ENCODE measurements at regions of chr17 and their contacts with region 1.

Region 1: GRCh38 chr17:81666342-81667191 is at the starts of genes CCDC137 and OXLD1:
- DNase-seq: peak; percentile 94 to 96 (median 96)
- H3K4me3 ChIP-seq: peak within 1 kb of the TSS; percentile 63 to 91 (median 75)
- H3K4me3 Mint-ChIP-seq: peak within 1 kb of the TSS; percentile 92 to 99
- H3K27ac ChIP-seq: peak within 1 kb of the TSS; percentile 76 to 89
- H3K27ac Mint-ChIP-seq: peak within 1 kb of the TSS; percentile 75 to 97 (median 96)
- H3K4me1 ChIP-seq: peaks cover 24 to 30% of the 10 kb centered on the region in 2 donors
- H3K4me1 Mint-ChIP-seq: peaks cover 24% of the 10 kb centered on the region
- H3K27me3 ChIP-seq: no peaks in the 10 kb centered on the region
- H3K27me3 Mint-ChIP-seq: peaks cover 0 to 4% (median 0%) of the 10 kb centered on the region in 3 donors
- CTCF ChIP-seq: no peak
- polyA plus RNA-seq, gene CCDC137: 2.4 to 8.8 (median 3.6) TPM
- polyA plus RNA-seq, gene OXLD1: 46.0 to 61.1 (median 51.8) TPM

Region 2: GRCh38 chr17:81683584-81684237 is 17.1 kb after region 1 on chr17 and contains the starts of genes ARL16 and HGS:
- intact Hi-C with region 1: loop called (anchors 1 kb)
- DNase-seq: peak; percentile 98 to 99 (median 99)
- H3K4me3 ChIP-seq: peak within 1 kb of the TSS; percentile 84 to 99 (median 97)
- H3K4me3 Mint-ChIP-seq: peak within 1 kb of the TSS; percentile 87 to 92
- H3K27ac ChIP-seq: peak within 1 kb of the TSS; percentile 51 to 94
- H3K27ac Mint-ChIP-seq: peak within 1 kb of the TSS; percentile 86 to 98 (median 94)
- H3K4me1 ChIP-seq: peaks cover 22 to 25% of the 10 kb centered on the region in 2 donors
- H3K4me1 Mint-ChIP-seq: peaks cover 25% of the 10 kb centered on the region
- H3K27me3 ChIP-seq: no peaks in the 10 kb centered on the region
- H3K27me3 Mint-ChIP-seq: peaks cover 0 to 1% (median 0%) of the 10 kb centered on the region in 3 donors
- CTCF ChIP-seq: no peak
- polyA plus RNA-seq, gene ARL16: 17.6 to 43.0 (median 28.7) TPM
- polyA plus RNA-seq, gene HGS: 19.3 to 200 (median 28.0) TPM

Region 3: GRCh38 chr17:81702971-81703746 is 36.6 kb after region 1 on chr17 and contains the start of gene MRPL12:
- intact Hi-C with region 1: loop called in 1 of 2 experiments (anchors 5 kb)
- DNase-seq: peak; percentile 84 to 92 (median 86)
- H3K4me3 ChIP-seq: peak within 1 kb of the TSS; percentile 67 to 89 (median 84)
- H3K4me3 Mint-ChIP-seq: peak within 1 kb of the TSS; percentile 91 to 96
- H3K27ac ChIP-seq: peak within 1 kb of the TSS; percentile 86 to 97
- H3K27ac Mint-ChIP-seq: peak within 1 kb of the TSS; percentile 93 to 97 (median 95)
- H3K4me1 ChIP-seq: peaks cover 22 to 32% of the 10 kb centered on the region in 2 donors
- H3K4me1 Mint-ChIP-seq: peaks cover 29% of the 10 kb centered on the region
- H3K27me3 ChIP-seq: no peaks in the 10 kb centered on the region
- H3K27me3 Mint-ChIP-seq: peaks cover 0 to 5% (median 0%) of the 10 kb centered on the region in 3 donors
- CTCF ChIP-seq: peak; percentile 29
- polyA plus RNA-seq, gene MRPL12: 21.2 to 57.0 (median 38.3) TPM

Region 4: GRCh38 chr17:81711814-81712467 is 45.4 kb after region 1 on chr17 and contains the start of gene SLC25A10:
- intact Hi-C with region 1: loop called in 1 of 2 experiments (anchors 5 kb)
- DNase-seq: peak; percentile 59 to 74 (median 72)
- H3K4me3 ChIP-seq: peak within 1 kb of the TSS; percentile 23 to 78 (median 46)
- H3K4me3 Mint-ChIP-seq: peak within 1 kb of the TSS; percentile 80 to 90
- H3K27ac ChIP-seq: no peak within 1 kb of the TSS
- H3K27ac Mint-ChIP-seq: peak within 1 kb of the TSS in 5 of 7 donors; percentile 38 to 81 (median 76)
- H3K4me1 ChIP-seq: peaks cover 26 to 42% of the 10 kb centered on the region in 2 donors
- H3K4me1 Mint-ChIP-seq: peaks cover 29% of the 10 kb centered on the region
- H3K27me3 ChIP-seq: peaks cover 0 to 8% of the 10 kb centered on the region in 2 donors
- H3K27me3 Mint-ChIP-seq: peaks cover 0 to 21% (median 13%) of the 10 kb centered on the region in 3 donors
- CTCF ChIP-seq: no peak
- polyA plus RNA-seq, gene SLC25A10: 1.8 to 2.3 (median 1.9) TPM

Measured in CD14-positive monocyte (primary cell).